Head of caudate nucleus (tissue), 42 donors: ENCODE measurements at regions of chr1 and their contacts with region 1.

Region 1: DNA sequence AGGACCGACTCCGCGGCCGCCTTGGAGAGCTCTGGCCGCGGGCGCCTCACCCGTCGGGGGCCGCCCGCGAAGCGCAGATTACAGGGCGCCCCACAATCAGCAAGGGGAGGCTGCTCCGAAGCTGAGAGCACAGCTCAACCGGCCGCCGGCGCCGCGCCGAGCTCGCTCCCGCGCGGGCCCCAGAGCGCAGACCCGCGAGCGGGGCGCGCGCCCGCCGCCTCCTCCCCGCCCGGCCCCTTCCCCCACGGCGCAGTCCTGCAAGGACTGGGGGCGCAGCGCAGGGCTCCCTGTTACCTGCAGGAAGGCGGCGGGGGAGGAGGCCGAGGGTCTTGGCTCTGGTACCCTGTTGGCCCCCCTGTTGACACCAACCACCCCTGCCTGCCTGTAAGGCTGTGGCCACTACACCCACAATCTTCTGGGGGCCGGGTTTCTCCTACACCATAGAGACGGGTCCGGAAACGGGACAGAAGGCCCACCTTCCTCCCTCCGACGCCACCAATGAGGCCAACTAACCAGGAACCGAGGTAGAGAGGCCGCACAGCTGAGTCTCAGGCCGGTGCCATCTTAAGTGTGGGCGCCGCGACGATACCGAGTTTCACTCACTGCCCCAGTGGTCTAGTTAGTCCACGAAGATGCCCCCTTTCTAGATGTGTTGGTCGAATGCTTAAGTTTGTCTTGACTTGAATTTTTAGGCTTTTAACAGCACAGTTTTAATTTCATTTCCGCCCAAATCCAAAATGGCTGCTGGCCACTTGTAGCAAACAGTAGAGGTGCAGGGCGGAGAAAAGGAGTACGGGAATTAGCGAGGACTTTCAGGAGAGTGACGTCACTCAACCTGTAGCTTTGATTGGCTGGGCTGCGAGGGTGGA is at the start of gene SCYL3:
- DNase-seq: peak; percentile 90 to 99 (median 97)

Region 2: GRCh38 chr1:169794530-169795416 is 99.0 kb before region 1 on chr1 and contains the start of gene METTL18:
- intact Hi-C with region 1: loop called (anchors 5 kb)
- DNase-seq: peak; percentile 90 to 98 (median 94)

Region 3: GRCh38 chr1:169874229-169874628 is 19.5 kb before region 1 on chr1:
- intact Hi-C with region 1: no loop called
- DNase-seq: no peak